ENCODE measurements at regions of chr19 and their contacts with region 1.

Region 1: GRCh38 chr19:45879971-45880370 is 6.0 kb downstream of the IRF2BP1 start:
- DNase-seq: no peak
- H3K4me3 ChIP-seq: no peak overlapping the region
- H3K27ac ChIP-seq: no peak overlapping the region
- H3K4me1 ChIP-seq: peaks cover 23% of the 10 kb centered on the region
- H3K27me3 ChIP-seq: no peaks in the 10 kb centered on the region
- CTCF ChIP-seq: no peak

Region 2: DNA sequence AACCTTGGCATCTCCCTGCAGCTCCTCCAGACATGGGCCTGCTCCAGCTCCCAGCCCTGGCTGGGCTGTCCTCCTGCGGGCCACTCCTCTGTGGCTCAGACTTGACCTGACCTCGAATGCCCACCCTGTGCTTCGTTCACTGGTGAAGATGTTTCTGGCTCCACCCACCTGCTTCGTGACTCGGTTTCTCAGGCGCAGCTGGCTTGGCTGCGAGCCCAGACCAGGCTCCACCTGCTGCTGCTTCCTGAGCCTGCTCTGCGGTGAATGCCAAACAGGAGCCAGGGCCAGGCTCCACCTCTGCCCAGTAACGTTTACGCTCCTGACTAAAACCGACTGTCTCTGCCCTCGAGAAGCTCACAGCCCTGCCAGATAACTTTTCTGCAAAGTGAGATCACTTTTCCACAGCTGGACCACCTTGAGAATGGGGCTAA is 55.9 kb before region 1 on chr19:
- CTCF ChIA-PET with region 1: interaction called, 12 read pairs
- dilution Hi-C with region 1: no loop called
- in situ Hi-C with region 1: no loop called
- intact Hi-C with region 1: no loop called
- DNase-seq: peak; percentile 63
- H3K4me3 ChIP-seq: no peak overlapping the region
- H3K27ac ChIP-seq: no peak overlapping the region
- H3K4me1 ChIP-seq: peaks cover 6% of the 10 kb centered on the region
- H3K27me3 ChIP-seq: no peaks in the 10 kb centered on the region
- CTCF ChIP-seq: no peak

Region 3: GRCh38 chr19:45913874-45914830 is 34.2 kb after region 1 on chr19 and contains the start of gene NANOS2:
- CTCF ChIA-PET with region 1: no interaction called
- dilution Hi-C with region 1: no loop called
- in situ Hi-C with region 1: no loop called
- intact Hi-C with region 1: no loop called
- DNase-seq: no peak
- H3K4me3 ChIP-seq: no peak within 1 kb of the TSS
- H3K27ac ChIP-seq: no peak within 1 kb of the TSS
- H3K4me1 ChIP-seq: no peaks in the 10 kb centered on the region
- H3K27me3 ChIP-seq: no peaks in the 10 kb centered on the region
- CTCF ChIP-seq: peak in 1 of 2 donors; percentile 12
- total RNA-seq, gene NANOS2: not detected

Measured in mammary epithelial cell (primary cell).